ENCODE measurements at regions of chr1 and their contacts with region 1.

Region 1: GRCh38 chr1:12619792-12620487 is 1.9 kb upstream of the DHRS3 start:
- DNase-seq: peak; percentile 87
- H3K4me3 Mint-ChIP-seq: peak overlapping the region; percentile 97
- H3K27ac Mint-ChIP-seq: peak overlapping the region; percentile 68
- H3K4me1 Mint-ChIP-seq: peaks cover 35% of the 10 kb centered on the region
- H3K27me3 Mint-ChIP-seq: no peaks in the 10 kb centered on the region

Region 2: DNA sequence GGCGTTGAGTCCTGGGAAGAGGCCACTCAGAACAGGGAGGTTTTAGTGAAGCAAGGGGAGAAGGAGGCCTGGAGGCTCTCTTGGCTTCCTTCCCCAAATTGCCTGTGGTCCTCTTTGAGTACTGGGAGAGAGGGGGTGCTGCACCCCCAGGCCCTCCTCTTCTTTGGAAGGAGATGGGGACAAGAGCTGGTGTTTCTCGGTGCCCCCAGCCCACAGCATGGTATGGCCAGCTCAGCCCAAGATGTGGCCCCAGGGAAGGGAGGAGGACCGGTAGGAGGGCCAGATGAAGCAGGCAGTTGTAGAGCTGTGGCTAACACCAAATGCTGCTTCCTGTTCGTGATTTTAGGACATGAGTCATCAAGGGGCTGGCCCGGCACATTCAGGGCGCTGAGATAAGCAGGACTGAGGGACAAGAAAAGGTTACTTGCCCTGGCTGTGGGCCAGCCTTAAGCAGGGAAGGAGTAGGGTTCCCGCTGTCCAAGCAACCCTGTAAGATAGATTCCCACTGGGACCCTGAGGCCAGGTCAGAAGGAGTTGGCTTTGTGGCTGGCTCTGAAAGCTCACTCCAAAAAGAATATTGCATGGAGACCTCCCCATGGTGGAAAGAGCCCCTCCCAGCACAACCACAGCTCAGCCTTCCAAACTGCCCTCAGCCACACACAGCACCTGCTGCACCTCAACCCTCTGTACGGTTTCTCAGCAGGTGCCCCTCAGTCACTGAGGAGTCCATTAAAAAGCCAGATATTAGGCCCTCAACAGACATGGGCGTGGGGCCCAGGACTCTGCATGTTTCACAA is 458.1 kb before region 1 on chr1:
- CTCF ChIA-PET with region 1: no interaction called
- intact Hi-C with region 1: loop called (anchors 5 kb)
- DNase-seq: peak; percentile 92
- H3K4me3 Mint-ChIP-seq: no peak overlapping the region
- H3K27ac Mint-ChIP-seq: peak overlapping the region; percentile 83
- H3K4me1 Mint-ChIP-seq: peaks cover 70% of the 10 kb centered on the region
- H3K27me3 Mint-ChIP-seq: no peaks in the 10 kb centered on the region

Region 3: DNA sequence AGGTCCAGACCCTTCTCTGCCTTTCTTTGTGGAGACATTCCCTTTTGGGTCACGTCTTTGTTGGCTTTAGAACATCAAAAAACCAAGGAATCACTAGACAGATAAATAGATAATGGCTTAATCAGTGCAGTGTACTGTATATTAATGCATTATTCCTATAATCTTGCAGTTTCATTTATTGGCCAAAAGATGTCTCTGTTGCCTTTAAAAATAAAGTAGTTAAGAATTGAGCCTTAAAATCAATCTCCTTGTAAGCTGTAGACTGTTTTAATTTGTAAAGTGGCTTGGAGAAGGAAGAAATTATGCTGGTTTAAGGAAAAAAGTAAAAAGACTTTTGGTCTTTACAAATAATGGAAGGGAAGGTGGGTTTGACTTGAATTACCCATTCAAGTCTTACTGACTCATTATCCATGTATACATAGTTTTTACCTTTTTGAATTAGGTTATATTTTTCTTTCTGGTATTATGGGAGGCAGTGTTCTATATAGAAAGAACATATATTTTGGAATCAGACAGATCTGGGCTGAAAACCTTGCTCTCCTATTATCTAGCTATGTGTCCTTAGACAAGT is 305.5 kb before region 1 on chr1:
- CTCF ChIA-PET with region 1: interaction called, 13 read pairs
- intact Hi-C with region 1: loop called (anchors 1 kb)
- DNase-seq: no peak
- H3K4me3 Mint-ChIP-seq: no peak overlapping the region
- H3K27ac Mint-ChIP-seq: no peak overlapping the region
- H3K4me1 Mint-ChIP-seq: no peaks in the 10 kb centered on the region
- H3K27me3 Mint-ChIP-seq: no peaks in the 10 kb centered on the region

Region 4: DNA sequence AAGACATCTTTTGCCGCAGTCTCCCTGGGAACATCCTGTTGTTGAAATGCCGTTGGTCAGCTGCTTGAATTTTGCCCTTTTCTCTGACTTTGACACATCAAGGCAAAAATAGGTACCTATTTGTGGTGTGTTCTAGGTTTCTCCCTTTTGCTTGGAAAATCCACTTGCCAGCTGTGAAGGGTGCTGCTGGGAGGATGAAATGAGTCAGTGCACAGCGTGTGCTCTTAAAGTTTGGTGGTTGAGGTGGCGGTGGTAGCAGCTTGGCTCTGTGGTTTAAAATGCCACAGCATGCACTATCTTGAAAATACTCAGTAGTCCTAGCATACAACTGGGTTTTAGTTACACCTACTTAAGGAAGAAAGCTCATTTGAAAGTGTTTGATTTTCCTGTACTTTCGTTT is 185.8 kb before region 1 on chr1:
- CTCF ChIA-PET with region 1: interaction called, 5 read pairs
- intact Hi-C with region 1: loop called (anchors 1 kb)
- DNase-seq: peak; percentile 89
- H3K4me3 Mint-ChIP-seq: no peak overlapping the region
- H3K27ac Mint-ChIP-seq: peak overlapping the region; percentile 59
- H3K4me1 Mint-ChIP-seq: peaks cover 74% of the 10 kb centered on the region
- H3K27me3 Mint-ChIP-seq: no peaks in the 10 kb centered on the region

Region 5: GRCh38 chr1:12511516-12512468 is 108.1 kb before region 1 on chr1:
- CTCF ChIA-PET with region 1: interaction called, 9 read pairs
- intact Hi-C with region 1: loop called (anchors 2 kb)
- DNase-seq: no peak
- H3K4me3 Mint-ChIP-seq: peak overlapping the region; percentile 80
- H3K27ac Mint-ChIP-seq: peak overlapping the region; percentile 97
- H3K4me1 Mint-ChIP-seq: peaks cover 61% of the 10 kb centered on the region
- H3K27me3 Mint-ChIP-seq: no peaks in the 10 kb centered on the region

Region 6: GRCh38 chr1:12658531-12659453 is 38.9 kb after region 1 on chr1:
- CTCF ChIA-PET with region 1: interaction called, 6 read pairs
- intact Hi-C with region 1: loop called (anchors 2 kb)
- DNase-seq: peak; percentile 83
- H3K4me3 Mint-ChIP-seq: peak overlapping the region; percentile 28
- H3K27ac Mint-ChIP-seq: no peak overlapping the region
- H3K4me1 Mint-ChIP-seq: peaks cover 4% of the 10 kb centered on the region
- H3K27me3 Mint-ChIP-seq: peaks cover 2% of the 10 kb centered on the region

Measured in activated naive CD4-positive, alpha-beta T cell treated with anti-CD3 and anti-CD28 coated beads for 36 hours (primary cell).